Prostate gland (tissue), 2 donors: ENCODE measurements at regions of chr19 and their contacts with region 1.

Region 1: DNA sequence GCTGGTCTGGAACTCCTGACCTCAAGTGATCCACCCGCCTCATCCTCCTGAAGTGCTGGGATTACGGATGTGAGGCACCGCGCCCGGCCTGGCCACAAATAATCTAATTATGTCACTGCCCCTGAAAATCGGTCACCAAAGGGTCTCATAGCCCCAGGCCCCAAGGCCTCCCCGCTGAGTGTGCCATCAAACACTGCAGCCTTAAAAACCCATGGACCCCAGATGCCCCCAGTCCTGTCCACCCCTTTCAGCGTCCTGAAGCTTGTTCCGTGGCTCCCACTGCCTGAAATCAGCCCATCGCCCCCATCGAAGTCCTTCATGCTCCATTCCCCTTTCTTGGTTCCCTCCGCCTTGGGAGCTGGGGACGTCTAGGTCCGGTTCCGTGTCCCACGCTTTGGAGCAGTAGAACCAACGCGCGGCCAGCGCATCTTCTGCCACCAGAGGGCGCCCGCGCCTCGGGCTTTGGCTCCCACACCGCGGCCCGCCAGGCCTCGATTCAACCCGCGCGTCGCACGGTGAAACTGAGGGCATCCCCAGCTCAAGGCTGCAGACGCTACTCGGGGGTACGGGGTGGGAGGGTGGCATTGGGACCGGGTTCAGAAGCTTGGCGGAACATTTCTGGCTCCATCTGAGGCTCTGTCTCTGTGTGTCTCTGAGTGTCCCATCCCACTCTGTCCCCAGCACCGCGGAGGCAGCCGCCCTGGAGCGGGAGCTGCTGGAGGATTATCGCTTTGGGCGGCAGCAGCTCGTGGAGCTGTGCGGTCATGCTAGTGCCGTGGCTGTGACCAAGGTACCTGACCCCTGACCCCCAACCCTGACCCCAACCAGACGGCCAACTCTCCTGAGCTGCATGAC is 3.5 kb downstream of the YJEFN3 start:
- DNase-seq: peak; percentile 76
- H3K4me3 ChIP-seq: no peak overlapping the region
- H3K27ac ChIP-seq: no peak overlapping the region
- H3K4me1 ChIP-seq: no peaks in the 10 kb centered on the region
- H3K27me3 ChIP-seq: no peaks in the 10 kb centered on the region
- CTCF ChIP-seq: peak; percentile 89 to 95 (median 92)
- POLR2A ChIP-seq: no peak

Region 2: GRCh38 chr19:19170053-19170872 is 361.9 kb before region 1 on chr19 and contains the start of gene MEF2B:
- intact Hi-C with region 1: no loop called
- DNase-seq: peak; percentile 65
- H3K4me3 ChIP-seq: peak within 1 kb of the TSS in 1 of 2 donors; percentile 18
- H3K27ac ChIP-seq: no peak within 1 kb of the TSS
- H3K4me1 ChIP-seq: no peaks in the 10 kb centered on the region
- H3K27me3 ChIP-seq: no peaks in the 10 kb centered on the region
- CTCF ChIP-seq: no peak
- POLR2A ChIP-seq: no peak
- total RNA-seq, gene MEF2B: not detected

Region 3: DNA sequence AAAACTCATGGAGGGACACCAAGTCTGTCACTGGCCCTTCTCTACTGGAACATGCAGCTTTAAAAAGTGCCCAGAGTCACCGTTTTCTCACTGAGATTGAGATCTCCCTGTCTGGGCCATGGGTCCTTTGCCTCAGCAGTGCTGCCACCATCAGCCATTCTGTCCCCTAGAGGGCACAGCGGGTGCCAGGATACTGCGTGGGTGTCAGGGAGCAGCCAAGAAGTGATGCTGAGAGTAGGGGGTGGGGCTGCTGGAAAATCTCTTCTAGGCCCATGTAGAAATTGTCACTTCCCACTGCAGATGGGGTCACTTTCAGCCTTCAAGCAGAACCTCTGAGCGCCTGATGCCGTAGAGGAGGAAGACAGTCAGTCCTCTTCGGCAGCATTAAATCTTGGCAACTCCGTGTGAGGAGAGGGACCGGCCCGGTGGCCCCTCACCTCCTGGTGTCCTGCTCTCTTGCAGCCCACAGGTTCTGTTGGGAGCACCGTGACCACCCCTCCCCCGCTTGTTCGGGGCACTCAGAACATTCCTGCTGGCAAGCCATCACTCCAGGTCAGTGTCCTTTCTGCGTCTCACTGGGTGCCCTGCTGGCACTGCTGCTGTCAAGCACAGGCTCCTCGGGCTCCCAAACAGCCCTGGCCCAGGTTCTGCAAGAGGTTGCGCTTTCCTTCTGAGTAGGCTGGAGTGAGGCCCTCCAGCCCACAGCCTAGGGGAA is 38.2 kb before region 1 on chr19:
- intact Hi-C with region 1: no loop called
- DNase-seq: no peak
- H3K4me3 ChIP-seq: no peak overlapping the region
- H3K27ac ChIP-seq: no peak overlapping the region
- H3K4me1 ChIP-seq: no peaks in the 10 kb centered on the region
- H3K27me3 ChIP-seq: no peaks in the 10 kb centered on the region
- CTCF ChIP-seq: no peak
- POLR2A ChIP-seq: no peak

Region 4: DNA sequence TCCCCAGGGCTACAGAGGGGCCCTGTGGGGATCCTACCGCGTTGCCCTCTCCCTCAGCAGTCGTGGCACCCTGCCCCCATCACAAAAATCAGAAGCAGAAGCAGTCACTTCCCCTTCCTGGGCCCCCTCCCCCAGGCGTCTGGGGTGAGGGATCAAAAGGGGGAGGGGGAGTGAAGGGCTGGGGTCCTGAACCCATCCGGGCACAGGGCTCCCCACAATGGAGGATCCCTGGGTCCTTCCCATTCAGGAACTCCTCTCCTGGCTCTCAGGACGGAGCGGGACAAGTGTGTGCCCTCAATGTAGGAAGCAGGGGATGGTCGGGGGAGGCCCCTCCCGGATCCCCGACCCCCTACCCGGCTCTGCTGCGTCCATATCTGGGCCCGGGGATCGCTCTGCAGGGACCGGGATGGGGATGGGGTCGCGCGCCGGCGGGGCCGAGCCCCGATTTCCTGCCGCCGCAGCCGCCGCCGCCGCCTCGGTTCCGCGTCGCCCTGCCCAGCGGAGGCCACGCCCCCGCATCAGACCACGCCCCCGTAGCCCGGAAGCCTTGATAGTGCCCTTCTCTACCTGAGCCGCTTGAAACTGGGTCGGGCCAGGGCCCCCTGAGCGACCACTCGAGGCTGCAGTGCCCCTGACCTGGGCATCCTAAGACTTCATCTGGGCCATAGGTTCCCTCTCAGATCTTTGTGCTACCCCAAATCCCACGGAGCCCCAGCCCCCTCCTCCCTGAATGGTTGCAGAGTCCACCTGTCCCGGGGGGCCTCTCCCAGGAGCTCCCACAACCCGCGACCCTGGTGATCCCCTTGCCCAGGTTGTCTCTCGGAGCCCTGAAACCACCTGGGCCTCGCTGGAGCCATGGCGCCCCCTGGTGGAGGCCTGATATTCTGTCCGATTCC is 111.2 kb after region 1 on chr19 and contains the start of gene GMIP:
- intact Hi-C with region 1: loop called (anchors 2 kb)
- DNase-seq: peak; percentile 66
- H3K4me3 ChIP-seq: peak within 1 kb of the TSS; percentile 62 to 72
- H3K27ac ChIP-seq: peak within 1 kb of the TSS; percentile 51 to 58
- H3K4me1 ChIP-seq: no peaks in the 10 kb centered on the region
- H3K27me3 ChIP-seq: no peaks in the 10 kb centered on the region
- CTCF ChIP-seq: peak; percentile 82 to 92 (median 89)
- POLR2A ChIP-seq: peak; percentile 66
- total RNA-seq, gene GMIP: 10.2 to 11.6 TPM

Region 5: GRCh38 chr19:19956434-19957075 is 424.4 kb after region 1 on chr19:
- intact Hi-C with region 1: loop called (anchors 5 kb)
- DNase-seq: no peak
- H3K4me3 ChIP-seq: no peak overlapping the region
- H3K27ac ChIP-seq: no peak overlapping the region
- H3K4me1 ChIP-seq: no peaks in the 10 kb centered on the region
- H3K27me3 ChIP-seq: no peaks in the 10 kb centered on the region
- CTCF ChIP-seq: no peak
- POLR2A ChIP-seq: no peak